CD4-positive, alpha-beta memory T cell (primary cell): ENCODE measurements at regions of chr17 and their contacts with region 1.

Region 1: GRCh38 chr17:44775136-44775837 is 16.5 kb downstream of the ADAM11 start:
- DNase-seq: peak; percentile 94 to 99 (median 96)
- H3K4me3 ChIP-seq: peak overlapping the region; percentile 57 to 73
- H3K4me3 Mint-ChIP-seq: peak overlapping the region; percentile 88 to 97 (median 90)
- H3K27ac ChIP-seq: peak overlapping the region; percentile 30
- H3K27ac Mint-ChIP-seq: peak overlapping the region; percentile 72 to 89 (median 84)
- H3K4me1 ChIP-seq: peaks cover 18% of the 10 kb centered on the region
- H3K4me1 Mint-ChIP-seq: peaks cover 5 to 21% (median 9%) of the 10 kb centered on the region in 4 donors
- H3K27me3 ChIP-seq: no peaks in the 10 kb centered on the region
- H3K27me3 Mint-ChIP-seq: peaks cover 4 to 8% of the 10 kb centered on the region in 2 donors

Region 2: DNA sequence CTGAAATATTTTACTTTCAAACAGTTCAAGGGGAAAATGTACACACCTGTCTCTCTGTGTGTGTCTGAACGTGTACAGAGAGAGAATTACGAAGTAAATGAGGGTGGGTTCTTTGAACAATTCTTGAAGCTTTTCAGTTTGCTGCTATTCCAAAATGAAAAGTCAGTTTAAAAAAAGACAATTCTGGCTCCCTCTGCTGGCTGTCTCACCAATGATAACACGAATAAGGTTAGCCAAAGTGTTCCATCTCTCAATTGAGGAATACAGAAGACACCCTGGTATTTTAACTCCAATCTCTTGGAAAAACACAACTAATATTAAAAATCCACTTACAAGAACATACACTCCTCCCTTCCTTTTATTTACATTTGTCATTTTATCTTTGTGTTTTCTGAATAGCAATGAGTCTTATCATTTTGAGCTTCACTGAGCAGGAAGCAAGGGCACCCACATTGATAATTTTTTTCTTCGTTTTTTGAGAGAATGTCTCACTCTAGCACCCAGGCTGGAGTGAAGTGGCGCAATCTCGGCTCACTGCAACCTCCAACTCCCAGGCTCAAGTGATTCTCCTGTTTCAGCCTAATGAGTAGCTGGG is 103.4 kb after region 1 on chr17:
- CTCF ChIA-PET with region 1: interaction called, 14 read pairs
- POLR2A ChIA-PET with region 1: interaction called, 3 read pairs
- intact Hi-C with region 1: loop called (anchors 1 kb)
- DNase-seq: peak in 2 of 5 donors; percentile 16 to 19
- H3K4me3 ChIP-seq: no peak overlapping the region
- H3K4me3 Mint-ChIP-seq: no peak overlapping the region
- H3K27ac ChIP-seq: no peak overlapping the region
- H3K27ac Mint-ChIP-seq: peak overlapping the region in 1 of 7 donors; percentile 13
- H3K4me1 ChIP-seq: no peaks in the 10 kb centered on the region
- H3K4me1 Mint-ChIP-seq: peaks cover 0 to 7% (median 0%) of the 10 kb centered on the region in 4 donors
- H3K27me3 ChIP-seq: no peaks in the 10 kb centered on the region
- H3K27me3 Mint-ChIP-seq: no peaks in the 10 kb centered on the region

Region 3: GRCh38 chr17:44919885-44920564 is 144.7 kb after region 1 on chr17:
- CTCF ChIA-PET with region 1: no interaction called
- POLR2A ChIA-PET with region 1: no interaction called
- intact Hi-C with region 1: no loop called
- DNase-seq: peak in 4 of 5 donors; percentile 45 to 50 (median 48)
- H3K4me3 ChIP-seq: no peak overlapping the region
- H3K4me3 Mint-ChIP-seq: no peak overlapping the region
- H3K27ac ChIP-seq: no peak overlapping the region
- H3K27ac Mint-ChIP-seq: no peak overlapping the region
- H3K4me1 ChIP-seq: no peaks in the 10 kb centered on the region
- H3K4me1 Mint-ChIP-seq: peaks cover 0 to 3% (median 0%) of the 10 kb centered on the region in 4 donors
- H3K27me3 ChIP-seq: no peaks in the 10 kb centered on the region
- H3K27me3 Mint-ChIP-seq: peaks cover 4 to 6% of the 10 kb centered on the region in 2 donors

Region 4: DNA sequence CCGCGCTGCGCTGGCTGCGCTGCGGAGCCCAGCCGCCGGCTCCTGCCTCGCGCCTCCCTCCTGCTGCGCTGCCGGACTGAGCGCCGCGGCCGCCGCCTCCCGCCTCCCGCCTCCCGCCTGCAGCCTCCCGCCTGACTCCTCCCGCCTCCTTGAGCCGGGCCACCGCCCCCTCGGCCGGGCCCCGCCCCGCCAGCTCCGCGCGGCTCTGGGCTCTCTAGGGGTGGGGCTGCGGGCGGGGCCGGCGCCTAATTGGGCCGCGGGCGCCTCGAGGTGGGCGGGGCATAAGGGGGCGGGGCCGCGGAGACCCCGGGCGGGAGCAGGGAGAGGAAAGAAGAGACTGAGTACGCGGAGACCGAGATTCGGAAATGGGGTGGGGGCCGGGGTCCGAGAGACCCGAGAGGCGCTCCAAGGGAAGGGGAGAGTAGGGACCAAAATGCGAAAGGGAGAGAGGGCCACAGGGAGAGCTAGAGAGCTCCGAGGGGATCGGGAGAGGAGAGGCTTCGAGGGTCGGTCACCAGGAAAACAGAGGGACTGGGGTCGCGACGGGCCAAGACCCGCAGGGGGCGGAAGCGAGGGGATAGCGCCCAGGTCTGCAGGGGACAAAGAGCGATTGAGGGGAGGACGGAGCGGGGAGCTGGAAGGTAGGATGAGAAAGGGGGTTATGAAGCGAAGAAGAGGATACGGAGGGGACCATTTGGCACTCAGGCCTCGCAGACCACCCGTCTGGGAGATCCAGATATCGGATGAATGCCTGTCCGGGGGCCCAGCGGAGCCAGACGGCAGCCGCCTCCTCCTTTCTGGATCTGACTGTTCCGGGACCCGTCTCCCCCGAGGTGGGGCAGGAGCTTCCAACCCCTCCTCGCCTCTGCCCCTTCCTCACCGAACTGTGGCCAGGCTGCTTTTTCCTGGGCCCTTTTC is 193.2 kb after region 1 on chr17 and contains the start of gene C1QL1:
- CTCF ChIA-PET with region 1: no interaction called
- POLR2A ChIA-PET with region 1: no interaction called
- intact Hi-C with region 1: loop called (anchors 5 kb)
- DNase-seq: peak; percentile 71 to 79 (median 73)
- H3K4me3 ChIP-seq: peak within 1 kb of the TSS; percentile 47 to 55
- H3K4me3 Mint-ChIP-seq: peak within 1 kb of the TSS; percentile 64 to 90 (median 76)
- H3K27ac ChIP-seq: no peak within 1 kb of the TSS
- H3K27ac Mint-ChIP-seq: peak within 1 kb of the TSS in 3 of 7 donors; percentile 35 to 54 (median 38)
- H3K4me1 ChIP-seq: peaks cover 28% of the 10 kb centered on the region
- H3K4me1 Mint-ChIP-seq: peaks cover 12 to 42% (median 24%) of the 10 kb centered on the region in 4 donors
- H3K27me3 ChIP-seq: peaks cover 37% of the 10 kb centered on the region
- H3K27me3 Mint-ChIP-seq: peaks cover 22 to 48% of the 10 kb centered on the region in 2 donors
- total RNA-seq, gene C1QL1: not detected

Region 5: DNA sequence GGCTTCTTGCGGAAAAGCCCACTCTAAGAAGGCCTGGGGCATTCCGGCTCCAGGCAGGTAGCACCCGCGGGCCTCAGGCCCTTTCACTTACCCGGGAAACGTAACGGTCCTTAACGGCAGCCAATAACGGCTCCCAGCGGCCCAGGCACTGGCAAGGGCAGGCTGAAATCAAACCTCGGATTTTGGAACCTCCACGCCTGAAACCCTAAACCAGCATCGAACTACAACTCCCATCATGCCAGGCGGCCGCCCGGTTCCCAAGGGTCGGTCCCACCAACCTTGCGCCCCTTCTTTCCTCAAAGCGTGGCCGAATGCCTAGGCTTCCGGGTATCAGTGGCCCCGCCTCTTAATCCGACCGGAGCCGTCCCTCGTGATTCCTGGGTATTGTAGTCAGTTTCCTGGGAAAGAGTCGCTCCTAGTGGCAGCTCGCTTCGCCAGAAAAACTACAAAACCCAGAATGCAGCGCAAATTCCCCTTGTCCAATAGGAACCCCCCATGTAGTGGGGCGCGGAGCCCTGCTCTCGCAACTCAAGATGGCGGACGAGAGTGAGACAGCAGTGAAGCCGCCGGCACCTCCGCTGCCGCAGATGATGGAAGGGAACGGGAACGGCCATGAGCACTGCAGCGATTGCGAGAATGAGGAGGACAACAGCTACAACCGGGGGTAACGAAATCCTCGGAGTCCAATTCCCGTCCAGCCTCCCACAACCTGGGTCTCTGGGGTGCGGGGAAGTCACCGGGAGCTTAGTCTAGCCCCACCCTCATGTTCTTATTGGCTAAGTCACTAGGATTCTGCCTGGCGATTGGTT is 285.7 kb after region 1 on chr17 and contains the start of gene NMT1:
- CTCF ChIA-PET with region 1: no interaction called
- POLR2A ChIA-PET with region 1: interaction called, 6 read pairs
- intact Hi-C with region 1: loop called (anchors 1 kb)
- DNase-seq: peak; percentile 98 to 99 (median 98)
- H3K4me3 ChIP-seq: peak within 1 kb of the TSS; percentile 80 to 100
- H3K4me3 Mint-ChIP-seq: peak within 1 kb of the TSS; percentile 96 to 100 (median 100)
- H3K27ac ChIP-seq: peak within 1 kb of the TSS; percentile 88
- H3K27ac Mint-ChIP-seq: peak within 1 kb of the TSS; percentile 91 to 100 (median 98)
- H3K4me1 ChIP-seq: peaks cover 42% of the 10 kb centered on the region
- H3K4me1 Mint-ChIP-seq: peaks cover 20 to 64% (median 46%) of the 10 kb centered on the region in 4 donors
- H3K27me3 ChIP-seq: no peaks in the 10 kb centered on the region
- H3K27me3 Mint-ChIP-seq: no peaks in the 10 kb centered on the region
- total RNA-seq, gene NMT1: 125 to 126 TPM